ENCODE measurements at regions of chr11 and their contacts with region 1.

Region 1: DNA sequence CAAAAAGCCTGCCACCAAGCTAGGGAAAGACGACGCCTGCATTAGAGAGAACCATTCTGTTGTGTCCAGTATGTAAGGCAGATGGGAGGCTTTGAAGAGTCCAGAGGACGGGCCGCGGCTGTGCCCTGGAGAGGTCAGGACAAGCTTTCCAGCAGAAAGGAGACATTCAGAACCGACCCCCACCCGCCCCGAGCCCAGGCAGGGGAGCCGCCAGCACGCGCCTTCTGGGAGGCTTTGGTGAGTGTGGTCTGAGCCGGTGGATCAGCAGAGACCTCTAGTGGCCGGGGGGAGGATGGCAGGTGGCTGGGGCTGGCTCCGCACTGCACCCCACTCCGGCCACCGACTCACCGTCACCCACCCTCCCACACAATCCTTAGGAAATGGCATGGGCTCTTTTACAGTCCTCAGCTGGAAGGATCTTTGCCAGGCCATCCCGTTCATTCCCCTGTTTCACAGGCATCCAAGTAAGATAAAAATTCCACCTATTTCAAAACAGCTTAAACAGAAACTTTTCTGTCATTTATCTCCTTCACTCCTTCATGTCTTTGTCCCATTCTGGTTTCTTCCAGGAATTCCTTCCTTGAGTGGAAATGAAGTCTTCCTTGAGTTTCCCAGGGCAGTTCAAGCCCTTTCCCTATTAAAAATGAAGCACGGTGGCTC is 91.2 kb downstream of the FEZ1 start:
- DNase-seq: peak; percentile 79
- ATAC-seq: peak; percentile 82 to 84

Region 2: GRCh38 chr11:125091247-125091876 is 313.5 kb before region 1 on chr11:
- intact Hi-C with region 1: loop called in 1 of 2 experiments (anchors 10 kb)
- DNase-seq: no peak
- ATAC-seq: peak; percentile 90 to 91

Region 3: GRCh38 chr11:125164422-125165110 is 240.3 kb before region 1 on chr11 and contains the start of gene PKNOX2:
- intact Hi-C with region 1: loop called in 1 of 2 experiments (anchors 10 kb)
- DNase-seq: peak; percentile 86
- ATAC-seq: peak; percentile 78
- total RNA-seq, gene PKNOX2: 13.8 to 14.4 TPM

Region 4: DNA sequence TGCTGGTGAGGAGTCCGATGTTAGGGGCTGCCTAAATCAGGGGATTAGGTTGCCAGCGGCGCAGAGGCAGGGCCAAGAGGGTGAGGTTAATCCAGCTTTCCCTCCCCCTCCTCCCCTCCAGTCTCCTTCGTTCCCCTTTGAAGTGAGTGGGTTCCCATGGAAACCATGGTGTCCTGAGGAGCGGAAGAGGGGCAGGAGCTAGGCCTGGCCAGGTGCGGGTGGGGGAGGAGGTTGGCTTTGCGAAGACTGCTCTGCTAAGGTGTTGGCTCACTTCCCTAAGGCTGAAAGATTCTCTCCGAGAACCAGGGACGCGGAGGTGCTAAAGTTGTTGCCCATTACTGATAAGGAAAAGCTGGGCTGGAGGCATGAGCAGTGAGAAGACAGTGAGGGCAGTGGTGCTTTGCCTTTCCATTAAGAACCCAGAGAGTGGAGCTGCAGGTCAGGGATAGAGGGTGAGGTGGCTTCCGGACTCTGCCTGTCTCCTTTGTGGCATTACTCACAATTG is 33.4 kb before region 1 on chr11:
- intact Hi-C with region 1: loop called in 1 of 2 experiments (anchors 5 kb)
- DNase-seq: no peak
- ATAC-seq: no peak

Measured in left cardiac atrium (tissue), 4 donors.